GM12878 (cell line): ENCODE measurements at regions of chr16 and their contacts with region 1.

Region 1: DNA sequence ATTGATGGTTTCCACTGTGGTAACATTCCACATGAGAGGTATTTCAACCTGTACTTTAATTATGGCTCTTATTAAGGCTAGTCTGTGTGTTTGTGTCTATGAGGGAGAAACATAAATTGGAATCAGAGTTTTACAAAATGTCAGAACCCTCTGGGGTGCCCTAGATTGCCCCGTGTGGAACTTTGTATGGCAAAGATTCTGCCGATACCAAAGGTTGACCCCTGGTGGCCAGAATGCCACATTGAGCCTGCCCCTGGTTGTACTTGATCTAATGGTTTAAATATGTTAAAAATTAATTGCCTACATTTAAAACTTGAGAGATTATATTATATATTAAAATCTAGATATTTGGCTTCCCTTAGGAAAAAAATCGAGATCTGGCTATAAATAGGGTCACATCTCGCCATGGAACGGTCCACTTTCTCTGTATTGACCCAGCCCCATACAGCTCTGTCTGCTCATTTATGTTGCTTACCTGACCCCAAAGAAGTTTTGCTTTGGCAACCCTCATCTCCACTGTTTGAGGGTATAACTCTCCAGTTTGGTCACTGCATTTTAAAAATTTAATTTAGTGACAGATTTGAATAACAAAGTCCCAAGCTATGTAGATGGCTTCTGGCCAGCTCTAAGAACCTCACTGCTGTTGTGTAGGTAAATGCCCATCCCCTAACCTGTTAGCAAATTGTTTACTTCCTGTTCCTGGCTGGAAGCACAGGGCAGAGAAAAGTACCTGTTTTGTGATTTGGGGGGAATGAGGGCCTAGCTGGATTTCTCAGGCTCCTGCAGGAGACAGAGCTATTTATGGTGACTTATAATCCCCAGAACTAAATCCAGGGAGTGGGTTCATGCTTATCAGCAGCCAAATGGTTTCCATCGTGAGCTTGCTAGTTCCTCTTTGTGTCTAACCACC is 95.0 kb downstream of the PLCG2 start:
- DNase-seq: no peak
- ATAC-seq: peak; percentile 99
- H3K4me3 ChIP-seq: no peak overlapping the region
- H3K27ac ChIP-seq: peak overlapping the region; percentile 39; the same call in 1 of the 2 replicates
- H3K4me1 ChIP-seq: peaks cover 5% of the 10 kb centered on the region
- H3K27me3 ChIP-seq: no peaks in the 10 kb centered on the region
- CTCF ChIP-seq: peak; percentile 82 to 85 (median 83)
- EP300 ChIP-seq: no peak
- POLR2A ChIP-seq: no peak
- RAD21 ChIP-seq: peak; percentile 88

Region 2: GRCh38 chr16:81737885-81738786 is 136.0 kb before region 1 on chr16:
- CTCF ChIA-PET with region 1: interaction called, 73 read pairs
- POLR2A ChIA-PET with region 1: interaction called, 4 read pairs
- RAD21 ChIA-PET with region 1: interaction called, 36 read pairs
- SMC1A ChIA-PET with region 1: interaction called, 48 read pairs
- in situ Hi-C with region 1: no loop called
- intact Hi-C with region 1: loop called (anchors 2 kb)
- DNase-seq: peak; percentile 80
- ATAC-seq: peak; percentile 83
- H3K4me3 ChIP-seq: peak overlapping the region; percentile 64
- H3K27ac ChIP-seq: peak overlapping the region; percentile 78
- H3K4me1 ChIP-seq: peaks cover 29% of the 10 kb centered on the region
- H3K27me3 ChIP-seq: no peaks in the 10 kb centered on the region
- CTCF ChIP-seq: peak; percentile 83 to 97 (median 88); a peak in 5 of 6 replicates
- EP300 ChIP-seq: no peak; a peak in 1 of 4 replicates
- POLR2A ChIP-seq: no peak
- RAD21 ChIP-seq: peak; percentile 88

Region 3: GRCh38 chr16:81778861-81779535 is 95.1 kb before region 1 on chr16 and contains the start of gene PLCG2:
- CTCF ChIA-PET with region 1: interaction called, 32 read pairs
- POLR2A ChIA-PET with region 1: interaction called, 3 read pairs
- RAD21 ChIA-PET with region 1: interaction called, 46 read pairs
- SMC1A ChIA-PET with region 1: interaction called, 51 read pairs
- in situ Hi-C with region 1: no loop called
- intact Hi-C with region 1: loop called (anchors 2 kb)
- DNase-seq: no peak
- ATAC-seq: peak; percentile 83
- H3K4me3 ChIP-seq: peak within 1 kb of the TSS; percentile 99
- H3K27ac ChIP-seq: peak within 1 kb of the TSS; percentile 86
- H3K4me1 ChIP-seq: peaks cover 28% of the 10 kb centered on the region
- H3K27me3 ChIP-seq: no peaks in the 10 kb centered on the region
- CTCF ChIP-seq: no peak
- EP300 ChIP-seq: no peak
- POLR2A ChIP-seq: peak; percentile 83
- RAD21 ChIP-seq: no peak
- polyA plus RNA-seq, gene PLCG2: 47.6 to 53.9 TPM

Region 4: DNA sequence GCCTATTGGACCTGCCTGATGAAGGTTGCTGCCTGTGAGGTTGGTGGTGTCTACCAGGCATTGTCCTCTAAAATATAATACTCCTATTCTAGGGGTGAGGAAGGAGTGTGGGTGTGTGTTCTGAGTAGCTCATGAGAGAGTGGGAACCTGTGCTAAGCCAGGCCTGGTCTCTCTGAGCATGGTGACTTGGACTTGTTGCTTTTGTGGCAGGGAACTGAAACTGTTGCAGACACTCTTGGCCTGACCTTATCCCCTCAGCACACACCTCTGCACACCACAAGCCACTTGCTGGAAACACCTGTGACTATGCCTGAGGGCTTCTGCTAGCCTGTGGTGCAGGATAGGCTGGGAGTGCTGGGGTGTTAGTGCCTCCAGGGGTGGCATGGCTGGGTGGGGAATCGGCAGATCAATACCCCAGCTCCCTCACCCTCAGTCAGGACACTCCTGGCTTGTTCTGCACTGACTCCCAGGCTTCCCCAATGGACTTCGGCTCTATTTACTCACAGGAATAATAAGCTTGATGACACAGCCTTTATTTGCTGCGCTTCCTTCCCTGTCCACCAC is 65.1 kb before region 1 on chr16:
- CTCF ChIA-PET with region 1: interaction called, 10 read pairs
- POLR2A ChIA-PET with region 1: no interaction called
- RAD21 ChIA-PET with region 1: interaction called, 29 read pairs
- SMC1A ChIA-PET with region 1: interaction called, 13 read pairs
- in situ Hi-C with region 1: no loop called
- intact Hi-C with region 1: no loop called
- DNase-seq: peak; percentile 99
- ATAC-seq: peak; percentile 75
- H3K4me3 ChIP-seq: peak overlapping the region; percentile 48; the same call in 1 of the 2 replicates
- H3K27ac ChIP-seq: peak overlapping the region; percentile 99
- H3K4me1 ChIP-seq: peaks cover 78% of the 10 kb centered on the region
- H3K27me3 ChIP-seq: no peaks in the 10 kb centered on the region
- CTCF ChIP-seq: no peak
- EP300 ChIP-seq: peak; percentile 98
- POLR2A ChIP-seq: peak; percentile 61
- RAD21 ChIP-seq: peak; percentile 9; the same call in 1 of the 2 replicates

Region 5: GRCh38 chr16:81831722-81832126 is 42.4 kb before region 1 on chr16:
- CTCF ChIA-PET with region 1: interaction called, 32 read pairs
- POLR2A ChIA-PET with region 1: interaction called, 4 read pairs
- RAD21 ChIA-PET with region 1: interaction called, 13 read pairs
- SMC1A ChIA-PET with region 1: interaction called, 16 read pairs
- in situ Hi-C with region 1: no loop called
- intact Hi-C with region 1: no loop called
- DNase-seq: peak; percentile 82
- ATAC-seq: peak; percentile 91
- H3K4me3 ChIP-seq: peak overlapping the region; percentile 64
- H3K27ac ChIP-seq: peak overlapping the region; percentile 95
- H3K4me1 ChIP-seq: peaks cover 87% of the 10 kb centered on the region
- H3K27me3 ChIP-seq: no peaks in the 10 kb centered on the region
- CTCF ChIP-seq: peak; percentile 20 to 60 (median 55); a peak in 5 of 6 replicates
- EP300 ChIP-seq: 0 out of 4 replicates have a peak, but pooled peaks have one; percentile 25 to 56
- POLR2A ChIP-seq: peak; percentile 77
- RAD21 ChIP-seq: peak; percentile 42

Region 6: GRCh38 chr16:81863630-81864352 is 10.3 kb before region 1 on chr16:
- CTCF ChIA-PET with region 1: interaction called, 22 read pairs
- POLR2A ChIA-PET with region 1: interaction called, 4 read pairs
- RAD21 ChIA-PET with region 1: interaction called, 14 read pairs
- SMC1A ChIA-PET with region 1: interaction called, 44 read pairs
- in situ Hi-C with region 1: no loop called
- intact Hi-C with region 1: no loop called
- DNase-seq: peak; percentile 43
- ATAC-seq: peak; percentile 82
- H3K4me3 ChIP-seq: peak overlapping the region; percentile 13; the same call in 1 of the 2 replicates
- H3K27ac ChIP-seq: peak overlapping the region; percentile 1; the same call in 1 of the 2 replicates
- H3K4me1 ChIP-seq: peaks cover 60% of the 10 kb centered on the region
- H3K27me3 ChIP-seq: no peaks in the 10 kb centered on the region
- CTCF ChIP-seq: 0 out of 6 replicates have a peak, but pooled peaks of 1 of the 3 experiments have one; percentile 8
- EP300 ChIP-seq: no peak
- POLR2A ChIP-seq: peak; percentile 51
- RAD21 ChIP-seq: 0 out of 2 replicates have a peak, but pooled peaks have one; percentile 1

Region 7: GRCh38 chr16:81940781-81941560 is 66.9 kb after region 1 on chr16:
- CTCF ChIA-PET with region 1: no interaction called
- POLR2A ChIA-PET with region 1: no interaction called
- RAD21 ChIA-PET with region 1: no interaction called
- SMC1A ChIA-PET with region 1: no interaction called
- in situ Hi-C with region 1: no loop called
- intact Hi-C with region 1: no loop called
- DNase-seq: no peak
- ATAC-seq: peak; percentile 35; the same call in 2 of the 3 replicates
- H3K4me3 ChIP-seq: no peak overlapping the region
- H3K27ac ChIP-seq: no peak overlapping the region
- H3K4me1 ChIP-seq: no peaks in the 10 kb centered on the region
- H3K27me3 ChIP-seq: no peaks in the 10 kb centered on the region
- CTCF ChIP-seq: peak in 2 of 3 experiments; percentile 20 to 27; a peak in 3 of 6 replicates
- EP300 ChIP-seq: no peak
- POLR2A ChIP-seq: no peak
- RAD21 ChIP-seq: no peak